Stomach (tissue), 19 donors: ENCODE measurements at regions of chr7 and their contacts with region 1.

Region 1: DNA sequence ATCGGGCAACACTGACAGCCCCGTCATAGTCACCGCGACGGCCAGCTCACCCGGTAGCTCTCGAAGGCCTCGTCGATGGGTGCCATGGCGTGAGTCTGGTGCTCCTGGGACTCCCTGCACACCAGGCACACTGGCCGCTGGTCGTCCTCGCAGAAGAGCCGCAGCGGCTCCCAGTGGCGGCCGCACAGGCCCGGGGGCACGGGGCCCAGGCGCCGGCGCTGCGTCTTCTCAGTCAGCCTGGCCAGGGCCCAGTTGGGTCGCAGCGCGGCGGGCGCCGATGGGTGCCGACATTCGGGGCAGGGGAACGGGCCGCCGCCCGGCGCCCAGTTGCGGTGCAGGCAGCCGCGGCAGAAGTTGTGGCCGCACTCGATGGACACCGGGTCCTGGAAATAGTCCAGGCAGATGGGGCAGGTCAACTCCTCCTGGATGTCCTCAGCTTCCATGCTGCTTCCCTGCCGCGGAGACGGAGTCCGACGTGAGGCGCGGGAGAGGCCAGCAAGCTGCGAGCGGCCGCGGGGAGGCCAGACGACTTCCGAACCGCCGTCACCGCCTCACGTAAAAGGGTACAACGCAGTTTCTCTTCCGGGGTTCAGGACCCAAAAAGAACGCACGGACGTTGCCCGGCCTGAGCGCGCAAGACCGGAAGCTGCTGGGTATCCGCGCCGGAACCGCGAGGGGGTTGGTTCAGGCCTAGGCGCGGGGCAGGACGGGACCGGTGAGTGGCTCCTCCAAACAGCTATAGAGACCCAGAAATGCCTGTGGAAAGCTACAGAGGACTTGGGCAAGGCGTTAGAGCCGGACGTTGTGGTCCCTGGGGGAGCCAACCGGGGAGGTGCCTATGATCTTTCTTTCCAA is at the start of gene TRIM4:
- DNase-seq: peak; percentile 93 to 97
- H3K4me3 ChIP-seq: peak within 1 kb of the TSS; percentile 70 to 88 (median 80)
- H3K27ac ChIP-seq: peak within 1 kb of the TSS; percentile 89 to 97 (median 93)
- H3K4me1 ChIP-seq: peaks cover 37 to 62% (median 49%) of the 10 kb centered on the region in 4 donors
- H3K27me3 ChIP-seq: no peaks in the 10 kb centered on the region
- CTCF ChIP-seq: no peak
- EP300 ChIP-seq: no peak
- POLR2A ChIP-seq: peak in 1 of 4 donors; percentile 63
- total RNA-seq, gene TRIM4: 25.3 to 46.1 (median 40.3) TPM

Region 2: DNA sequence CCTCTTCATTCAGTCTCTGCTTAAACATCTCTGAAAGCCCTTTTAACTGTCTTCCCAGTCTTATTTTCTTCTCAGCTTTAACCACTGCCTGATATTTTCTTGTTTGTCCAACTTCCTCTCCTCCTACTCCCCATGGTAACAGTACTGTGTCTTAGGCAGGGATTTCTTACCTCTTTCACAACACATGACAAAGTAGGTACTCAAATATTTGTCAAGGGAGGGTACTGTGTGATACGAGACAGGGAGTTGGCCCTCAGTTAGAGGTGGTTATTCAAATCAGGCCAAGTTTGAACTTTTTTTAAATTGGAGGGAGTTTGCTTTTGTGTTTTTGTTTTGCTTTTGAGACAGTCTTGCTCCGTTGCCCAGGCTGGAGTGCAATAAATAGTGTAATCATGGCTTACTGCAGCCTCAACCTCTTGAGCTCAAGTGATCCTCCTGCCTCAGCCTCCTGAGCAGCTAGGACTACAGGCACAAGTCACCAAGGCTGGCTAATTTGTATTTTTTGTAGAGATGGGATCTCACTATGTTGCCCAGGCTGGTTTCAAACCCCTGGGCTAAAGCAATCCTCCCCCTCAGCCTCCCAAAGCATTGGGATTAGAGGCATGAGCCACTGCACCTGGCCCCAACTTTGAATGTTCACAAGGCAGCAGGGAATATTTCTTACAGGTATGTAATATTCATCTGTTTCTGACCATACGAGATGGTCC is 708.8 kb before region 1 on chr7:
- intact Hi-C with region 1: no loop called
- DNase-seq: peak; percentile 31 to 91
- H3K4me3 ChIP-seq: no peak overlapping the region
- H3K27ac ChIP-seq: peak overlapping the region; percentile 85 to 95 (median 86)
- H3K4me1 ChIP-seq: peaks cover 0 to 15% (median 7%) of the 10 kb centered on the region in 4 donors
- H3K27me3 ChIP-seq: no peaks in the 10 kb centered on the region
- CTCF ChIP-seq: no peak
- EP300 ChIP-seq: no peak
- POLR2A ChIP-seq: no peak

Region 3: GRCh38 chr7:99990460-99990852 is 71.3 kb after region 1 on chr7:
- intact Hi-C with region 1: loop called (anchors 5 kb)
- DNase-seq: no peak
- H3K4me3 ChIP-seq: peak overlapping the region in 3 of 4 donors; percentile 13 to 23 (median 16)
- H3K27ac ChIP-seq: no peak overlapping the region
- H3K4me1 ChIP-seq: peaks cover 3 to 25% (median 20%) of the 10 kb centered on the region in 4 donors
- H3K27me3 ChIP-seq: peaks cover 0 to 11% (median 0%) of the 10 kb centered on the region in 3 donors
- CTCF ChIP-seq: no peak
- EP300 ChIP-seq: no peak
- POLR2A ChIP-seq: no peak

Region 4: DNA sequence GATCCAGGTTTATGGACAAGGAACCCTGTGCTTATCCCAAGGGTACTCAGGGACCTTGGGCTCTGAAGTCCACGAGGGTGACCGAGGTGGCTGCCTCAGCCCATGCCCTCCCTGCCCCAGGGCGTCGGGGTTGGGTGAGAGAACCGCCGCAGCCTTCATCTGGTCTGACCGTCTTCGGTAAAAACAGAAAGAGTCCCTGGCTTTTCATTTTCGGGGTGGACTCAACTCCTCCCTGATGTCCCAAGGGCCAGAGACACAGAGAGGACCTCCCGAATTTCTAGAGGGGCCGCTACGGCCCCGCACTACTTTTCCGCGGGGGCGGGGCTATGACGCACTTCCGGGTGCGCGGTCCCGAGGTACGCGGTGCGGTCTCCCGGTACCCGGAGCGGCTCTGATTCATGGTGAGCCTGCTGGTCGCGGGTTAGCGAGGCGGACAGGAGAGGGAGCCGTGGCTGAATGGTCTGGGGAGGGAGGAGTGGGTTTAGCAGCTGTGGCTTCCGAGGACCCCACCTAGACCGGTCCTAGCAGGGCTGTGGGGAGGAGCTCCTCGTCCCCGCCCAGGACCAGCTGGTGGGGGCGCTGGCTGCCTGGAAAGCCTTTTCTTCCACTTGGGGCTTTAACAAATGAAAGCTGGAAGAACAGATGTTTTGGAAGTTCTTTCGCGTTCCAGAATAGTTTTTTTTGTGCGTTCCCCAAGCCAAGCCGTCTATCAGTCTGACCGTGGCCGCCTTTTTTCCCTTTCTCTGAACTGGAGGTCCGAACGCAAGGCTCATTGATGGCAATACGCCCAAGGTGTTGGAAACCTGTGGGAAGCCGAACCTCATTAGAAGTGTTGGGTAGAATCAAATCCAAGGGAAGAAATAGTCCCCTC is 130.5 kb after region 1 on chr7 and contains the start of gene ZSCAN21:
- intact Hi-C with region 1: loop called (anchors 10 kb)
- DNase-seq: peak; percentile 85 to 96
- H3K4me3 ChIP-seq: peak within 1 kb of the TSS; percentile 61 to 82 (median 76)
- H3K27ac ChIP-seq: peak within 1 kb of the TSS; percentile 96 to 98 (median 98)
- H3K4me1 ChIP-seq: peaks cover 6 to 35% (median 23%) of the 10 kb centered on the region in 4 donors
- H3K27me3 ChIP-seq: no peaks in the 10 kb centered on the region
- CTCF ChIP-seq: peak in 1 of 7 experiments; percentile 17
- EP300 ChIP-seq: no peak
- POLR2A ChIP-seq: peak in 2 of 4 donors; percentile 61 to 79
- total RNA-seq, gene ZSCAN21: 6.4 to 48.4 (median 14.6) TPM